BJ (cell line): ENCODE measurements at regions of chr7 and their contacts with region 1.

Region 1: DNA sequence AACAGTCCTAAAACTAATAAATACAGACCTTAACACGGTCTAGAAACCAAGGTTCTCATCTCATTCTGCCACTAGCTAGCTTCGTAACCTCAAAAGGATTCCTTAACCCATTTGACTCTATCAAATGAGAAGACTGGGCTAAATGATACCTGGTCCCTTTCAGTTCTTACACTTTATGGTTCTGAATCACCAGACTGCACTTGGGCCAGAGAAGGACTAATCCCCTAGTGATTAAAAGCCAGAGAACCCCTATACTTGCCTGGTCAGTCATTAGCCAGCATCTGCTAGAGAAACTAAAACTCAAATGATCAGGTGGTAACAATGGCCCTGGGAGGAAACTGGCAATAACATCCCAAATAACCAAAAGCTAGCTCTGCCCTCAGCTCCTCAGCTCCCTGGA is 16.8 kb downstream of the TMEM243 start:
- DNase-seq: no peak
- H3K4me3 ChIP-seq: no peak overlapping the region
- H3K27me3 ChIP-seq: no peaks in the 10 kb centered on the region
- CTCF ChIP-seq: no peak

Region 2: GRCh38 chr7:87067788-87068187 is 134.9 kb before region 1 on chr7:
- CTCF ChIA-PET with region 1: no interaction called
- POLR2A ChIA-PET with region 1: no interaction called
- DNase-seq: no peak
- H3K4me3 ChIP-seq: no peak overlapping the region
- H3K27me3 ChIP-seq: no peaks in the 10 kb centered on the region
- CTCF ChIP-seq: no peak

Region 3: GRCh38 chr7:87188930-87189329 is 13.8 kb before region 1 on chr7:
- CTCF ChIA-PET with region 1: no interaction called
- POLR2A ChIA-PET with region 1: no interaction called
- DNase-seq: no peak
- H3K4me3 ChIP-seq: no peak overlapping the region
- H3K27me3 ChIP-seq: no peaks in the 10 kb centered on the region
- CTCF ChIP-seq: no peak

Region 4: GRCh38 chr7:88226886-88227516 is 1024.3 kb after region 1 on chr7:
- CTCF ChIA-PET with region 1: no interaction called
- POLR2A ChIA-PET with region 1: interaction called, 13 read pairs
- DNase-seq: no peak
- H3K4me3 ChIP-seq: no peak overlapping the region
- H3K27me3 ChIP-seq: no peaks in the 10 kb centered on the region; the same call in 1 of the 2 replicates
- CTCF ChIP-seq: no peak